Activated B cell treated with CpG ODN at 0.5 μM for 24 hours (primary cell): ENCODE measurements at regions of chr6 and their contacts with region 1.

Region 1: GRCh38 chr6:112225691-112226090 is 28.7 kb downstream of the LAMA4 start:
- DNase-seq: no peak
- ATAC-seq: no peak
- H3K4me3 Mint-ChIP-seq: no peak overlapping the region
- H3K27ac Mint-ChIP-seq: no peak overlapping the region
- H3K4me1 Mint-ChIP-seq: no peaks in the 10 kb centered on the region
- H3K27me3 Mint-ChIP-seq: peaks cover 13% of the 10 kb centered on the region
- CTCF ChIP-seq: no peak

Region 2: DNA sequence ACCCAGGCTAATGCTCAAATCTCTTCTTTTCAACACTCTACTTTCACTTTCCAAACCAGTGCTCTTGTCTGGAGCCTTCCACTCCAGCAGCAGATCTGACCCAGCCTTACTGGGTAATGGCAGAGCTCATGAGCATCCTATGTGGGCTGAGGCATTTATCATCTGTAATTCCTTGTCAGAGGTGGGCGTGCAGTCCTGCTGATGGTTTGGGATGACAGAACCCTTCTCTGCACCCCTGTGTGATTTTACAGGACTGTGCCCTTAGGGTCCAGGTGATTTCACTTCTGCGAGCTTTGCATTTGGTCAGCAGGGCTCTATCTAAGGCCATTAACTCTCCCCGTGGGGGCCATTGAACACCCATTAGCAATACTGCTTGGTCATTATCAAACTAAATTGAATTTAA is 26.7 kb before region 1 on chr6:
- CTCF ChIA-PET with region 1: no interaction called
- POLR2A ChIA-PET with region 1: no interaction called
- intact Hi-C with region 1: no loop called
- DNase-seq: no peak
- ATAC-seq: no peak
- H3K4me3 Mint-ChIP-seq: no peak overlapping the region
- H3K27ac Mint-ChIP-seq: no peak overlapping the region
- H3K4me1 Mint-ChIP-seq: no peaks in the 10 kb centered on the region
- H3K27me3 Mint-ChIP-seq: peaks cover 10% of the 10 kb centered on the region
- CTCF ChIP-seq: no peak

Region 3: DNA sequence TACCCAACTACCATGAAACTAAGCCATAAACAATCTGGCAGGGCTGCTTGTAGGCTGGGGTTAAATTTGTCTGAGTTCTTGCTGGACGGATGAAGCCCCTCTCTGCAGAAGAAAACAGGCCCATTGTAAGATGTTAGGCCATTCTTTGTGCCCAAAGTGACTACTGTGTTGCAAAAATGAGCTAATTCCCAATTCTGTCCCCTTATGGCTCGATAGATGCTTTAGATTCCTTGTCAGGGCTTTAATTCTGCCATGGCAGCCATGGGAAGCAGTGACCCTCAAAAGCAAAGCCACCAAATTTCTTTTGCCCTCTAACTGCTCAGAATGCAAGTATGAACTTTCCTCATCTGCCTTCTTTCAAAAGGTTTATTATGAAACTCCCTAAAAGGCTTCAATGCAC is 16.6 kb before region 1 on chr6:
- CTCF ChIA-PET with region 1: no interaction called
- POLR2A ChIA-PET with region 1: no interaction called
- intact Hi-C with region 1: no loop called
- DNase-seq: no peak
- ATAC-seq: no peak
- H3K4me3 Mint-ChIP-seq: no peak overlapping the region
- H3K27ac Mint-ChIP-seq: no peak overlapping the region
- H3K4me1 Mint-ChIP-seq: peaks cover 4% of the 10 kb centered on the region
- H3K27me3 Mint-ChIP-seq: peaks cover 21% of the 10 kb centered on the region
- CTCF ChIP-seq: no peak

Region 4: DNA sequence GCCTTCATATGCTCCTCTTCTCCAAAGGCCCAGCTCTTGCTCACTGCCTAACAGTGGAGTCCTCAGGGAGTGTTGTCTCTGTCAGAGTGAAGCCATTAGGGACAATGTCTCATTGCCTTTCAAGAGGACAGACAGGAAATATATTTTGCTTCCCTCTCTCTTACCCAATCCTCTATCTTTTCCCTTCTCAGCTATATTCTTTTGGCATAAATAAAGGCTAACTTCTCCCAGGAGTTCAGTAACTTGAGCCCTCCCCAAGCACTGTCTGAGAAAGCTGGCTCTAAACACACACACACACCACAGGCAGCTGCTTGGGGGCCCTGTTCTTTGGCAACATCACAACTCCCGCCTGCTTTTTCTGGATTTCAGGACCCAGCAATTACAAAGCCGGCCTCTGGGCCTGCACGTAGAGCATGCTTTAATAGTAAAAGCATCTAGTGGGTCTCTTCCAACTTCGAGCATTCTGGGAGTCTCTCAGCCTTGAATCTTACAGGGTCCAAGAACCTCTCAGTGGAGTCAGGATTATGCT is 63.4 kb after region 1 on chr6:
- CTCF ChIA-PET with region 1: no interaction called
- POLR2A ChIA-PET with region 1: no interaction called
- intact Hi-C with region 1: loop called (anchors 5 kb)
- DNase-seq: no peak
- ATAC-seq: no peak
- H3K4me3 Mint-ChIP-seq: no peak overlapping the region
- H3K27ac Mint-ChIP-seq: no peak overlapping the region
- H3K4me1 Mint-ChIP-seq: no peaks in the 10 kb centered on the region
- H3K27me3 Mint-ChIP-seq: peaks cover 8% of the 10 kb centered on the region
- CTCF ChIP-seq: no peak